ENCODE measurements at regions of chr17 and their contacts with region 1.

Region 1: DNA sequence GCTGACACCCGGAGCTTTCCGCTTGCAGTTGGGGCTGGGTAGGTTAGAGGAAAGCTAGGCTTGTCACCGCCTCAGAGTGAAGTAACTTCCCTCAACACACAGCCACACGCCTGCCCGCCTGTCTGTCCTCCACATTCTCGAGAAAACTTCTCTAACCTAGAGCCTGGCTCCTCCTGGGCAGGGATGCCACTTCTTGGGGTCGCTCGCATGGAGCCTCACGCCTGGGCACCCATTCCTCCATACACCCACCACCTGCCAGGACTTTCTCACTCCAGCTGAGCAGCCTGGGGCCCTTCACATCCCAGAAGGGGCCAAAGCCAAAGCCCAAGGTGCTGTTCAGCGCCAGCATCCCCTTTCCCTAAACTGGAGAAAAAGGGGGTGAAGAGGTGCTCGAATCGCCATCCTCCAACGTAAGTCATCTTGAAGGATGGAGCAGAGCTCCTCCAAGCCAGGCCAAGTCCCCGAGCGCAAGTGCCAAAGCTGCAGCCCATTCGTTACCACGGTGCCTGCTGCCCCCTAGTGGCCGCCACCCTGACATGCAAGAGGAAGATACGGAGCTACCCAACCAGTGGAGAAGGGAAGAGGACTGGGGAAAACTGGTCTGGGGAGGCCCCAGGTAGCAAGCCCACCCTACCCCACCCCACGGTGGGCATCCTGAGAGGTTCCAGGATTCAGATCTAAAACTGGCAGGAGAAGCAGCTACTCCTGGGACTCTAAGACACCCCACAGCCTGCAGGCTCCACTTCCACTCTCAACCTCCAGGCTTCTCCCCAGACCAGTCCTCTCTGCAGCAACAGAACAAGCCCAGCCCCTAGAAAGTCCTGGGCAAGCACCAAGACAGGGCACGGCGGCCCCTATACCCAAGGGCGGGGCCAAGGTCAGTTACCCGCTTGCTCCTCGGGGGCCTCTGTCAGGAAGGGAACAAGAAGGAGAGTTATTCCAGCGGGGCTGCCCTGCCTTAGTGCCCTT is 63.1 kb downstream of the MYO18A start:
- DNase-seq: peak; percentile 47
- ATAC-seq: peak; percentile 78
- H3K4me3 ChIP-seq: no peak overlapping the region
- H3K27ac ChIP-seq: no peak overlapping the region
- H3K4me1 ChIP-seq: no peaks in the 10 kb centered on the region
- H3K27me3 ChIP-seq: no peaks in the 10 kb centered on the region
- CTCF ChIP-seq: peak; percentile 77
- POLR2A ChIP-seq: no peak
- RAD21 ChIP-seq: peak; percentile 70

Region 2: DNA sequence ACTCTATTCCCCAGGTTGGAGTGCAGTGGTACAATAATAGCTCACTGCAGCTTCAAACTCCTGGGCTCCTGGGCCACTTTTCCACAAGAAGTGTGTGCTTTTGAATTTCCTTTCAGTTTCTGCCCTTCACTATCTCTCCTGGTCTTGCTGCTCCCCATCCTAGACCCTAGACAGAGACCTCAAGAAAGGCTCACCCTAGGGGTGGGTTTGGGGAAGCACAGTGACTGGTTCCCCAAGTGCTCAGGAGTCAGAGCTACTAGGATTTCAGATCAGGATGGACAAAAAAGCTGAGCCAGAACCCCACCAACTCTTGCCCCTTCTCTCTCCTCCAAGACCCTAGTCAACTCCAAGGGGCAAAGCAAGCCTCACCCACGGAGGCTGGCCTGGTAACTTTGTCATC is 750.5 kb before region 1 on chr17:
- CTCF ChIA-PET with region 1: no interaction called
- POLR2A ChIA-PET with region 1: no interaction called
- dilution Hi-C with region 1: no loop called
- in situ Hi-C with region 1: no loop called
- intact Hi-C with region 1: no loop called
- DNase-seq: no peak
- ATAC-seq: no peak
- H3K4me3 ChIP-seq: no peak overlapping the region
- H3K27ac ChIP-seq: no peak overlapping the region
- H3K4me1 ChIP-seq: peaks cover 7% of the 10 kb centered on the region; the same call in 1 of the 2 replicates
- H3K27me3 ChIP-seq: no peaks in the 10 kb centered on the region
- CTCF ChIP-seq: no peak
- POLR2A ChIP-seq: no peak
- RAD21 ChIP-seq: no peak

Region 3: DNA sequence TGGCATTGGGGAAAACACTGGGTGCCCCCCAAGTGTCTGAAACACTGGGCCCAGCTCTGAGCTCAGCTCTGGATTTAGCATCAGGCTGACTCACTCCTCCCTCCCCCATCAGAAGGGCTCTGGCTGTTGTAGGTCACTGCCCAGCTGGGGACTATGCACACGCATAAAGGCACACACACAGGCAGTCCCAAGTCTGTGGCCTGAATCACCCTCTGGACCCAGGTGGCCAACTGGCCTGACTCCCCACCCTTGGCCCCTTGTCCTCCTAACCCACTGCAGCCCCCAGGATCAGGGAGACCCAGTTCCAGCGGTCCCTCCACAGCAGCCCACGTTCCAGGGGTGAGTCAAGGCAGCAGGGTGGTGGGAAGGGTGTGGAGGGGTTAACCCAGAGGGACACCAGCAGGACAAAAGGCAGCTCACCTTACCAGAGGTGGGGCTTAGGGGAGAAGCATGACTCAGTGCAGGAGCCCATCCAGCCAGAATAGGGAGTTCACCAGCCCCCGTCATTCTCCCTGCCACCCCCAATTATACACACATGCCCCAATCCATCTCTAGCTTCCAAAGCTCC is 16.1 kb after region 1 on chr17:
- CTCF ChIA-PET with region 1: interaction called, 10 read pairs
- POLR2A ChIA-PET with region 1: no interaction called
- dilution Hi-C with region 1: no loop called
- in situ Hi-C with region 1: no loop called
- intact Hi-C with region 1: no loop called
- DNase-seq: peak; percentile 89
- ATAC-seq: peak; percentile 84
- H3K4me3 ChIP-seq: no peak overlapping the region
- H3K27ac ChIP-seq: peak overlapping the region; percentile 75
- H3K4me1 ChIP-seq: peaks cover 37% of the 10 kb centered on the region
- H3K27me3 ChIP-seq: no peaks in the 10 kb centered on the region
- CTCF ChIP-seq: no peak
- POLR2A ChIP-seq: no peak
- RAD21 ChIP-seq: no peak

Region 4: GRCh38 chr17:29568331-29569244 is 451.5 kb after region 1 on chr17 and contains the start of gene TP53I13:
- CTCF ChIA-PET with region 1: no interaction called
- POLR2A ChIA-PET with region 1: no interaction called
- dilution Hi-C with region 1: no loop called
- in situ Hi-C with region 1: no loop called
- intact Hi-C with region 1: no loop called
- DNase-seq: peak; percentile 68
- ATAC-seq: peak; percentile 71
- H3K4me3 ChIP-seq: peak within 1 kb of the TSS; percentile 97
- H3K27ac ChIP-seq: peak within 1 kb of the TSS; percentile 88
- H3K4me1 ChIP-seq: peaks cover 11% of the 10 kb centered on the region
- H3K27me3 ChIP-seq: no peaks in the 10 kb centered on the region
- CTCF ChIP-seq: no peak
- POLR2A ChIP-seq: 0 out of 2 replicates have a peak, but pooled peaks have one; percentile 30
- RAD21 ChIP-seq: no peak
- total RNA-seq, gene TP53I13: 18.3 and 22.0 TPM in 2 replicates

Measured in IMR-90 (cell line).